Panc1 (cell line): ENCODE measurements at regions of chr7 and their contacts with region 1.

Region 1: GRCh38 chr7:53521601-53522184 is 486.3 kb downstream of the POM121L12 start:
- DNase-seq: no peak
- ATAC-seq: no peak
- H3K4me3 ChIP-seq: no peak overlapping the region
- H3K27ac ChIP-seq: no peak overlapping the region
- H3K4me1 ChIP-seq: no peaks in the 10 kb centered on the region
- H3K27me3 ChIP-seq: no peaks in the 10 kb centered on the region
- CTCF ChIP-seq: no peak

Region 2: GRCh38 chr7:53218730-53219504 is 302.8 kb before region 1 on chr7:
- CTCF ChIA-PET with region 1: no interaction called
- POLR2A ChIA-PET with region 1: no interaction called
- in situ Hi-C with region 1: no loop called
- intact Hi-C with region 1: no loop called
- DNase-seq: no peak
- ATAC-seq: no peak
- H3K4me3 ChIP-seq: no peak overlapping the region
- H3K27ac ChIP-seq: no peak overlapping the region
- H3K4me1 ChIP-seq: no peaks in the 10 kb centered on the region
- H3K27me3 ChIP-seq: no peaks in the 10 kb centered on the region
- CTCF ChIP-seq: no peak

Region 3: GRCh38 chr7:53466371-53466770 is 55.3 kb before region 1 on chr7:
- CTCF ChIA-PET with region 1: no interaction called
- POLR2A ChIA-PET with region 1: no interaction called
- in situ Hi-C with region 1: no loop called
- intact Hi-C with region 1: loop called (anchors 10 kb)
- DNase-seq: no peak
- ATAC-seq: no peak
- H3K4me3 ChIP-seq: no peak overlapping the region
- H3K27ac ChIP-seq: no peak overlapping the region
- H3K4me1 ChIP-seq: no peaks in the 10 kb centered on the region
- H3K27me3 ChIP-seq: no peaks in the 10 kb centered on the region
- CTCF ChIP-seq: no peak